Lower leg skin (tissue), 4 donors: ENCODE measurements at regions of chr7 and their contacts with region 1.

Region 1: DNA sequence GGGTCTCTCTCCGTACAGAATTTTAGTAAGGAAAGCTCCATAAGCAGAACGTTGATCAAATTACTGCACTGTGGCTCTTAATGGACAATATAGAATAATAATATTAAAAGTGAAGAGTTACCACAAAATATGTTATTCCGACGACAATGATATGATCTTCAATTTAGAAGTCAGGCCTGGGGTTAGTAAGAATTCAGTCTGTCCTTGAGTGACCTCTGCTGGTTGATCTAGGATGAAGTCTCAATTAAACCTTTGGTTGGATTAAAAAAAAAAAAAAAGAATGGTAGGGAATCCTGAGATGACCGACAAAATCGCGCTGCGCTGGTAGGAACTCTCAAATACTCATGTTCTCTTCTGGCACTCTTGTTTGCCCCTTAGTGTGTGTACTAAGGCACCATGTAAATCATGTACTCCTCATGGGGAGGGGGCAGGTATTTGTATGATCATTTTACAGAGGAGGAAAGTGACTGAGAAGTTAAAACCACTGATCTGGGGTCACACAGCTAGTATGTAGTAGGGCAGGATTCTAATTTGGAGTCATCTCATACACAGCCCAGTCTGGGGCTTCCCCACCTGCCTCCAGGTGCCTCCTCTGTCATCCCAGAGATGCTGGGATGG is 161.3 kb upstream of the NPVF start:
- DNase-seq: no peak
- H3K4me3 ChIP-seq: no peak overlapping the region
- CTCF ChIP-seq: no peak
- POLR2A ChIP-seq: no peak

Region 2: DNA sequence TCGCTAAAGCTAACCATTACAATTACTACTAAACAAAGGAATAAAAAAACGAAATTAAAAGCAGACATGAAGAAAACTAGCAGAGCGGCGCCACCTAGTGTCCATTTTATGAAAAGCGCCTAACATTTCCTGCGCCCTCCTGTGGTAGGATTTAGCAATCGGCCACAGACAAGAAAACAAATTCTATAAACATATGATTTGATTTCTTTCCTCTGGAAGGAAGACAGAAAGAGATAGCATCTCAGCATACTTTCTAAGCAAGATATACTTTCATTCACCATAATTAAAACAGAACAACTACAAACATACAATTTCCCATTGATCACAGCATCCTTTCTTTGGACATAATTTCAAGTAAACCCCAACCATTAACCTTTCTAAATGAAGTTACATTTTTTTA is 176.4 kb after region 1 on chr7:
- intact Hi-C with region 1: loop called (anchors 10 kb)
- DNase-seq: peak; percentile 67 to 92
- H3K4me3 ChIP-seq: no peak overlapping the region
- CTCF ChIP-seq: peak in 2 of 3 donors; percentile 90 to 96
- POLR2A ChIP-seq: no peak

Region 3: GRCh38 chr7:25851332-25852210 is 462.0 kb after region 1 on chr7:
- intact Hi-C with region 1: loop called (anchors 2 kb)
- DNase-seq: peak; percentile 86 to 96
- H3K4me3 ChIP-seq: no peak overlapping the region
- CTCF ChIP-seq: peak in 1 of 3 donors; percentile 61
- POLR2A ChIP-seq: no peak